ENCODE measurements at regions of chr1 and their contacts with region 1.

Region 1: GRCh38 chr1:28518000-28518744 is 12.3 kb downstream of the RCC1 start:
- DNase-seq: peak; percentile 89 to 95 (median 91)
- ATAC-seq: peak; percentile 80 to 95 (median 92)
- H3K4me3 ChIP-seq: peak overlapping the region; percentile 38 to 91 (median 74)
- H3K27ac ChIP-seq: peak overlapping the region in 11 of 12 donors; percentile 71 to 88 (median 82)
- H3K4me1 ChIP-seq: peaks cover 4 to 18% (median 10%) of the 10 kb centered on the region in 12 donors
- H3K27me3 ChIP-seq: no peaks in the 10 kb centered on the region
- CTCF ChIP-seq: peak; percentile 96 to 100 (median 98)
- POLR2A ChIP-seq: peak in 1 of 2 donors; percentile 66

Region 2: GRCh38 chr1:28341591-28341990 is 176.6 kb before region 1 on chr1:
- intact Hi-C with region 1: no loop called
- DNase-seq: no peak
- ATAC-seq: no peak
- H3K4me3 ChIP-seq: no peak overlapping the region
- H3K27ac ChIP-seq: no peak overlapping the region
- H3K4me1 ChIP-seq: no peaks in the 10 kb centered on the region
- H3K27me3 ChIP-seq: no peaks in the 10 kb centered on the region
- CTCF ChIP-seq: no peak
- POLR2A ChIP-seq: no peak

Region 3: GRCh38 chr1:28581536-28582247 is 63.5 kb after region 1 on chr1:
- intact Hi-C with region 1: loop called in 1 of 10 experiments (anchors 5 kb)
- DNase-seq: peak; percentile 95 to 98 (median 97)
- ATAC-seq: peak; percentile 97 to 99 (median 99)
- H3K4me3 ChIP-seq: peak overlapping the region; percentile 67 to 99 (median 88)
- H3K27ac ChIP-seq: peak overlapping the region; percentile 59 to 94 (median 86)
- H3K4me1 ChIP-seq: peaks cover 0 to 52% (median 21%) of the 10 kb centered on the region in 12 donors
- H3K27me3 ChIP-seq: no peaks in the 10 kb centered on the region
- CTCF ChIP-seq: peak in 3 of 12 donors; percentile 7 to 32 (median 18)
- POLR2A ChIP-seq: peak; percentile 13 to 98

Region 4: GRCh38 chr1:30166174-30166573 is 1648.0 kb after region 1 on chr1:
- intact Hi-C with region 1: no loop called
- DNase-seq: no peak
- ATAC-seq: no peak
- H3K4me3 ChIP-seq: no peak overlapping the region
- H3K27ac ChIP-seq: no peak overlapping the region
- H3K4me1 ChIP-seq: no peaks in the 10 kb centered on the region
- H3K27me3 ChIP-seq: peaks cover 0 to 18% (median 0%) of the 10 kb centered on the region in 9 donors
- CTCF ChIP-seq: no peak
- POLR2A ChIP-seq: no peak